Pancreas (tissue), 10 donors: ENCODE measurements at regions of chr7 and their contacts with region 1.

Region 1: DNA sequence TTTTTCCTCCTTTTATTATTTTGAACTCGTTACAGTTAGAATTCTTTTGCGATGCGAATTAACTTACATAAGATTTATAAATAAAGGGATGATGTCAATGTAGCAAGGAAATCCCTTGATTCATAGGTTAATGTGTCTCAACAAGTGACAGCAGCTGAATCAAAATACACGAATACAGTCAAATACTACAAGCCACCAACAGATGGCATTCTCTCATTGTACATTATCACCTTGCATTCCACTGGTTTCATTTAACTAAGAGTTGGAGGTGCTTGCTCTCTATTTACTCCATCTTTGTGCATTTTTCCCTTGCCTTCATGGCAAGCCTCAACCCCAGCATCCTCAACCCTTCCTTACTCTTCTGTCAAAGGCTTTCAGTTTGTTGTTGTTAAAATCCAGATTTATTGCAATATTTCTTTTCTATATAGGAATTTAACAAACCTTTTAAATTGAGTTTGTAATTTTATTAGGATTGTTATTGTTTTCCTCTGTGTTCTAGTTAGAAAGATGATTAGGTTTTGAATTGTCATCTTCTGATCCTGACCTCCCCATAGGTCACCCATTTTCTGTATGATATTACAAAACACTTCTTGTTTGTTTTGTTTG is 78.3 kb downstream of the SLC25A40 start:
- DNase-seq: no peak
- ATAC-seq: peak in 3 of 4 donors; percentile 75 to 87 (median 86)
- H3K4me3 ChIP-seq: no peak overlapping the region
- H3K27ac ChIP-seq: no peak overlapping the region
- H3K4me1 ChIP-seq: no peaks in the 10 kb centered on the region
- H3K27me3 ChIP-seq: no peaks in the 10 kb centered on the region
- CTCF ChIP-seq: peak in 3 of 4 donors; percentile 36 to 51 (median 37)

Region 2: GRCh38 chr7:87091495-87092190 is 706.3 kb before region 1 on chr7:
- intact Hi-C with region 1: no loop called
- DNase-seq: no peak
- ATAC-seq: no peak
- H3K4me3 ChIP-seq: no peak overlapping the region
- H3K27ac ChIP-seq: no peak overlapping the region
- H3K4me1 ChIP-seq: no peaks in the 10 kb centered on the region
- H3K27me3 ChIP-seq: no peaks in the 10 kb centered on the region
- CTCF ChIP-seq: no peak

Region 3: GRCh38 chr7:87687653-87688254 is 110.1 kb before region 1 on chr7:
- intact Hi-C with region 1: no loop called
- DNase-seq: no peak
- ATAC-seq: no peak
- H3K4me3 ChIP-seq: no peak overlapping the region
- H3K27ac ChIP-seq: no peak overlapping the region
- H3K4me1 ChIP-seq: no peaks in the 10 kb centered on the region
- H3K27me3 ChIP-seq: no peaks in the 10 kb centered on the region
- CTCF ChIP-seq: no peak

Region 4: DNA sequence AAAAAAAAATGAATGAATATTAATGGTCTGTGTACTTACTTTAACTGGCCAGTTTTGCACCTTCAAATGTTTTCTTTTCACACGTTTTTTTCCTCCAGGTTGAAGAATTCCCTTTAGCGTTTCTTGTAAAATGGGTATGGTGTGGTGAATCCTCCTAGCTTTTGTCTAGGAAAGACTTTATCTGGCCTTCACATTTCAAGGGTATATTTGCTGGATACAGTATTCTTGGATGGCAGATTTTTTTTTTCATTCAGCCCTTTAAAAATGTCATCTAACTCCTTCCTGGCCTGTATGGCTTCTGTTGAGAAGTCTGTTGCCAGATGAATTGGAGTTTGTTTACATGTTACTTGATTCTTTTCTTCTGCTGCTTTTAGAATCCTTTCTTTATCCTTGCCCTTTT is 68.2 kb after region 1 on chr7:
- intact Hi-C with region 1: no loop called
- DNase-seq: no peak
- ATAC-seq: no peak
- H3K4me3 ChIP-seq: no peak overlapping the region
- H3K27ac ChIP-seq: no peak overlapping the region
- H3K4me1 ChIP-seq: no peaks in the 10 kb centered on the region
- H3K27me3 ChIP-seq: no peaks in the 10 kb centered on the region
- CTCF ChIP-seq: no peak

Region 5: DNA sequence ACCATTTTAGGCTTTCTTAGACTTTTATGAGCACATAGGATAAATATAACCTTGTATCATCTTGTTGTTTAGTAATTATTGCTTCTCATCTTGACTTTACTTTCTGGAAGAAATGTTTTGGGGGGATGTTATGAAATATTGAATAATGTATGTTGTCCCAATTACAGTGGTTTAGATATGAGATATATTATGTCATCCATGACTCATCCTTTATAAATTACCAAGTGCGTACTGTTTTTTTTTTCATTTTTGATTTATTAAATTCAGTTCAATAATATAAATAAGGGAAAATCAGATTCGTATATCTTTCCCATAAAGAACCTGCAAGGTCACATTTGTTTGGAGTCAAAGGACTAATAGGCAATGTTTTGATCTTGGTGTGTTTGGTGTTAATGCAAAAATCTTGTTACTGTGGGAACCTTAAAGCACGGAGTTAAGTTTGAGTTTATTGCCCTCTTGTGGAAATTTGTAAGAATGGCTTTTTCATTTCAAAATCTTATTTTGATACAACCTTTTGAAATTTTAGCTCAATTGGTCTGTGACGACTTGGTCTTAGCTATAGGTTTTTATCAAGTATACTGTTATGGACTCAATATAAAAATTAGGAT is 313.3 kb after region 1 on chr7:
- intact Hi-C with region 1: loop called in 1 of 3 experiments (anchors 10 kb)
- DNase-seq: no peak
- ATAC-seq: peak in 3 of 4 donors; percentile 61 to 79 (median 76)
- H3K4me3 ChIP-seq: no peak overlapping the region
- H3K27ac ChIP-seq: no peak overlapping the region
- H3K4me1 ChIP-seq: no peaks in the 10 kb centered on the region
- H3K27me3 ChIP-seq: no peaks in the 10 kb centered on the region
- CTCF ChIP-seq: peak in 3 of 4 donors; percentile 30 to 38 (median 38)

Region 6: GRCh38 chr7:88169717-88170320 is 371.9 kb after region 1 on chr7:
- intact Hi-C with region 1: loop called in 1 of 3 experiments (anchors 10 kb)
- DNase-seq: no peak
- ATAC-seq: peak; percentile 38 to 69 (median 64)
- H3K4me3 ChIP-seq: no peak overlapping the region
- H3K27ac ChIP-seq: no peak overlapping the region
- H3K4me1 ChIP-seq: no peaks in the 10 kb centered on the region
- H3K27me3 ChIP-seq: no peaks in the 10 kb centered on the region
- CTCF ChIP-seq: peak in 3 of 4 donors; percentile 45 to 49 (median 46)